ENCODE measurements at regions of chr3 and their contacts with region 1.

Region 1: DNA sequence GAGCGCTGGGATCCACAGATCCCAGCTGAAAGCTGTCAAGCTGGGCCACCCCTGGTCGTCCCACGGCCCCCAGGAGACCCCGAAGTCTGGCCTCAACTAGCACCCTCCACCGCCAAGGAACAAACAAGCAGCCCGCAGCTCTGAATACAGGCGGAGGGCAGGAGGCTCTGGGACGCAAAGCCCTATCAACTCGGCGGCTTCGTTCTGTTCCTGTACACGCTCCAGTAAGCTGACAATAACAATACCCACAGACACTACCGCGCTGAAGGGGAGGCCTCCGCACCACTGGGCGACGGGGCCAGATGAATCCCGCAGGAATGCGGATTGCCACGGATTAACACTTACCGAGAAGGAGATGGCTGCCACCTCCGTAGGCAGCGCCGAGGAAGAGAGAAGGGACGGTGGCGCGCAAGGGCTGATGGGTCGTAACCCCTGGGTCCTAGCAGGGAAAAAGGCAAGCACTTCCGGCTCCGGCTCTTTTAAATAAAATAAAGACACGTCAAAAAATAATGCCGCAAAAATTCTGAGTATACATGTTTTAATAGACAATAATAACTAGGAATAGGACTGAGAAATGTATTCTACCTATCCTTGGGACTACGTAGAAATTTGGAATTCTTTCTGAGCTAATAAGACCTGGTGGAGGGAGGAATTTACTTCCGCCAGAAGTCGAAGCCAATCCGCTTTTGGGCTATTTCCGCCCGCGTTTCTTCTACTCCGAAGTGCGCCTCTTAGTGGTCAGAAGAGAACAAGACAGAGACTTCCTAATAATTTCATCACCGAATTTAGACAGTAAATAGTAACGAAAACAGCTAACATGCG is at the start of gene RPL32:
- DNase-seq: peak; percentile 78
- ATAC-seq: peak; percentile 92
- H3K4me3 Mint-ChIP-seq: peak within 1 kb of the TSS; percentile 96
- H3K27ac Mint-ChIP-seq: peak within 1 kb of the TSS; percentile 100
- H3K4me1 Mint-ChIP-seq: peaks cover 48% of the 10 kb centered on the region
- H3K27me3 Mint-ChIP-seq: no peaks in the 10 kb centered on the region
- CTCF ChIP-seq: no peak
- total RNA-seq, gene RPL32: 2,996 and 3,448 TPM in 2 replicates

Region 2: DNA sequence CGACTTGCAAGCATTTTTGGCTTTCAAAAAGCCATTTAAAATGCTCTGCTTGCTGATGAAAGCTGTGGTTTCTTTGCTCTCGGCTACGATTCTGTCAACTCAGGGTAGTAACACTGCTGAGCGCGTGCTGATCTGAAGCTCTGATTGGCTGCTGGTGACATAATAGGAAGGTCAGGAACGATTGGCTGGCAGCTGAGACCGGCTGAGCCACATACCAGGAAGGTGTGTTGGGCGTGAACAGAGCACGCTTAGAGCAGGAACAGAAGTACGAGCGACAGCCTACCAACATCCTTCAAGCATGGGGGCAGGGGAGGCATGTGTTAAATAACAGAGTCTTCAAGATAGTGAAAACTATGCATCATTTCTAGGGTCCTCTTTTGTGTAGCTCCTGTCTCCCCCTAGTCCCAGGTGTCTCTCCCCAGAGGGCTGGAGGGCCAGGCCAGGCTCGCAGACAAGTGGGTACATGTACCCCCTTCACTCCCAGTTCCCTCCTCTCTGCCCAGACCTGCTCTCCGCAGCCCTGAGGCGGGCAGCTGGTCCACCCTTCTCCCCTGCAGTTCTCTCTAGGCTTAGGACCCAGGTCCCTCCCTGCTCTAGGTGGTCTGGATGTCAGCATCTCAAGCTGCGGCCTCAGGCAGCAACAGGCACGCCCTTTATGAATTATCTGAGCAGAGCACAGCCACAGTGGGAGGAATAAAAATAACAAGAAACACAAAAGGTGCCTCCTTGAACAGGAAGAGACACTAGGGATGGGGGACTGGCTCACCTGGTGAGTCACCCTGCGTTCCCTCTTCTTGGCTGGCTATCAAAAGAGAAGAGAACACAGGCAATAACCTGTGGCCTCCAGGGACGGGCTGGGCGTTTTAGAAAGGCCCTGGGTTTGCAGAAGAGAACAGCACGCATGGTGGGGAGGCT is 1070.6 kb before region 1 on chr3:
- CTCF ChIA-PET with region 1: no interaction called
- POLR2A ChIA-PET with region 1: no interaction called
- intact Hi-C with region 1: no loop called
- DNase-seq: peak; percentile 20
- ATAC-seq: peak; percentile 100
- H3K4me3 Mint-ChIP-seq: peak overlapping the region; percentile 21
- H3K27ac Mint-ChIP-seq: peak overlapping the region; percentile 3
- H3K4me1 Mint-ChIP-seq: peaks cover 16% of the 10 kb centered on the region
- H3K27me3 Mint-ChIP-seq: no peaks in the 10 kb centered on the region
- CTCF ChIP-seq: no peak

Region 3: GRCh38 chr3:12663936-12664908 is 177.1 kb before region 1 on chr3 and contains the start of gene RAF1:
- CTCF ChIA-PET with region 1: no interaction called
- POLR2A ChIA-PET with region 1: interaction called, 18 read pairs
- intact Hi-C with region 1: loop called (anchors 1 kb)
- DNase-seq: peak; percentile 96
- ATAC-seq: peak; percentile 94
- H3K4me3 Mint-ChIP-seq: peak within 1 kb of the TSS; percentile 98
- H3K27ac Mint-ChIP-seq: peak within 1 kb of the TSS; percentile 98
- H3K4me1 Mint-ChIP-seq: peaks cover 37% of the 10 kb centered on the region
- H3K27me3 Mint-ChIP-seq: no peaks in the 10 kb centered on the region
- CTCF ChIP-seq: no peak
- total RNA-seq, gene RAF1: 89.9 and 103 TPM in 2 replicates

Region 4: DNA sequence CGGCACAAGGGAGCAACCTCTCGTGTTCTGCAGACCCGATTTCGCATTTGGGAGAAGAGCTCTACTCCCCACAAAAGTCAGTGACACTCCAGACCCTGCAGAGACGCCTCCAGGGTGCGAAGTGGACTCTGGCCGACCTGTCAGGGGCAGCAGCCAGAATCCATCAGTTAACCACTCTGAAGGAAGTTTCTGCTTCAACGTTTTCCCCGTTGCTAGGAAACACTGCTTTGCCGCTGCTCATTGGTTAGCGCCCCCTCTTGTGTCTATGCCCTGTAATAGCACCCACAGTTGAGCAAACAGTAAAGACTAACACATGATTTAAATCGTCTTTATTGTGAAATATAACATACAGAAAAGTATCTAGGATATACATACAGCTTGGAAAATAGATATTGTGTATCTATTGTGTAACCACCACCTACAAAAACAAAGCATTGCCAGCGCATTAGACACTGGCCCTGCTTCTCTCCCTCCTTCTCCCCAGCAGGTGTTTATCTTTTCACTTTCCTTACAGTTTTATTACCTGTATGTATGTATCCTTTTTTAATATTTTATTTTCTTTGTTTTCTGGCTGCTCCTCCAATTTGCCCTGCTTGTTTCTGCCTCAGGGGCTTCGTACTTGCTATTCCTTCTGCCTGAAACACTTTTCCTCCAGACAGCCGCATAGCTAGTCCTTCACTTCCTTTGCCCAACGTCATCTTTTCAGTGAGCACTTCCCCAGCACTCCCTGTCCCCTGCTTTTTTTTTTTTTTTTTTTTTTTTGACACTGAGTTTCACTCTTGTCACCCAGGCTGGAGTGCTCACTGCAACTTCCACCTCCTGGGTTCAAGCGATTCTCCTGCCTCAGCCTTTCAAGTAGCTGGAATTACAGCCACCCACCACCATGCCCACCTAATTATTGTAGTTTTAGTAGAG is 121.1 kb before region 1 on chr3:
- CTCF ChIA-PET with region 1: no interaction called
- POLR2A ChIA-PET with region 1: interaction called, 3 read pairs
- intact Hi-C with region 1: loop called (anchors 1 kb)
- DNase-seq: peak; percentile 45
- ATAC-seq: peak; percentile 99
- H3K4me3 Mint-ChIP-seq: peak overlapping the region; percentile 74
- H3K27ac Mint-ChIP-seq: peak overlapping the region; percentile 69
- H3K4me1 Mint-ChIP-seq: peaks cover 7% of the 10 kb centered on the region
- H3K27me3 Mint-ChIP-seq: peaks cover 3% of the 10 kb centered on the region
- CTCF ChIP-seq: peak; percentile 93

Region 5: DNA sequence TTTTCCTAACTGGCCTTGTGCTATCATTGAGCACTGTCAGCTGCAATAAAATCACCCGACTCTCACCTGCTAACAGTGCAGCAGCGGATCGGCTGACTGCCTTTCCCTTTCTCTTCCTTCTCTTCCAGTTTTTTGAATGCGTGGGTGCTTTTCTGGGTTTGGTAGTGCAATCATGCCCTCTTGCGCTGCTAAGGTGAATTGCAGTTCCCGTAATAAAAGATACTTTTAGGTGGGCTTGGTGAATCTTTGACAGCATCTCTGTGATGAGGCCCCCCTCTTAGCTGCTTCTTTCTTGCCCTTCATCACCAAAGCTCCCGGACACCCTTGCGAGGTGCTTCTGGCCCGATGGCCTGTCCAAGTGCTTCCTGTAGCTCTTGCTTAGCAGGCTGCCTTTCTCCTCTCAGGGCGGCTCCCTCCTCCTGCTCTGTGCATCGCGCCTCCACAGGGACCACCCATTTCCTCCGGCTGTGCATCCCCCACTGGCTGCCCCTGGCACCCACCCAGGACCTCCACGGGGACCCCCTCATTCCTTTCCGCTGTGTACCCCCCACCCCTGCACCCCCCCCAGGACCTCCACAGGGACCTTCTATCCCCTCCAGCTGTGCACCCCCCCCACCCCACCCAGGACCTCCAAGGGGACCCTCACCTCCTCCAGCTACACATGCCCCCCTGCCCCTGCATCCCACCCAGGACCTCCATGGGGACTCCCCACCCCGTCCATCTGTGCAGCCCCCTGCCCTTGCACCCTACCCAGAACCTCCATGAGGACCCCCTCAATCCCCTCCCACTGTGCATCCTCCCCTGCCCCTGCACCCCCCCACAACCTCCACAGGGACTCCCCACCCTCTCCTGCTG is 50.9 kb after region 1 on chr3:
- CTCF ChIA-PET with region 1: interaction called, 18 read pairs
- POLR2A ChIA-PET with region 1: interaction called, 6 read pairs
- intact Hi-C with region 1: loop called (anchors 2 kb)
- DNase-seq: no peak
- ATAC-seq: peak; percentile 52
- H3K4me3 Mint-ChIP-seq: no peak overlapping the region
- H3K27ac Mint-ChIP-seq: no peak overlapping the region
- H3K4me1 Mint-ChIP-seq: peaks cover 15% of the 10 kb centered on the region
- H3K27me3 Mint-ChIP-seq: peaks cover 3% of the 10 kb centered on the region
- CTCF ChIP-seq: peak; percentile 89

Region 6: DNA sequence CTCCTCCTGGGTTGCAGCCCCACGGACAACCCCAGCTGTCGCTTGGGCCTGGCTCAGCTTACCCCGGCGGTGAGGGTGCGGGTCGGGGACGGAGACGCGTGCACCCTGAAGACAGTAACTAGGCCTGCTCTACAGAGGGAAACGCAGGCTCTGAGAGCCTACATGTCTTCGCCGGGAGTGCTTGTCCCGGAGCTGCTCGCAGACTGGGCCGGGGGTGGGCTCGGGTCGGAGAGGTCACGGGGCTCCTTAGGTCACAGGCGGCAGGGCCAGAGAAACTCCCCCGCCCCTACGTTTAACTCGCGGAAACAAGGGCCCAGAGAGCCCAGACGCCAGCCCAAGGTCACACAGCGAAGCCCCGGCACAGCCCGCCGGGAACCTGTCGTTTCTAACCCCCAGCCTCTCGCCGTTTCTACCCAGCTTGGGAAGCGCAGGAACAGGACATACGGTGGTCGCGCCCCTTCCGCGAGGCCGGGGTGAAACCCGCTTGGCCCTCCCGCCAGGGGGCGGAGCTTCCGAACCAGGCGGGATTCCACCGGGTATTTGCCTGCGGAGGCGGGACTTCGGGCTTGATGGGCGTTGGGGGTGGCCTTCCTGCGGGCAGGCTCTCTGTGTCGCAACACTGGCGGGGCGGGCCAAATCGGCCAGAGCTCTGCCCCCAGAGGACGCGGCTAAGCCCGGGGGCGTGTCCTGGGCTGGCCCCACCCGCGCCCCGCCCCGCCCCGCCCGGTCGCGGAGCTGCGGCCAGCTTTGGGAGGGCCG is 638.4 kb after region 1 on chr3 and contains the start of gene HDAC11:
- CTCF ChIA-PET with region 1: interaction called, 5 read pairs
- POLR2A ChIA-PET with region 1: interaction called, 6 read pairs
- intact Hi-C with region 1: loop called (anchors 1 kb)
- DNase-seq: peak; percentile 97
- ATAC-seq: peak; percentile 97
- H3K4me3 Mint-ChIP-seq: peak within 1 kb of the TSS; percentile 90
- H3K27ac Mint-ChIP-seq: peak within 1 kb of the TSS; percentile 79
- H3K4me1 Mint-ChIP-seq: peaks cover 2% of the 10 kb centered on the region
- H3K27me3 Mint-ChIP-seq: peaks cover under 1% of the 10 kb centered on the region
- CTCF ChIP-seq: no peak
- total RNA-seq, gene HDAC11: 1.6 and 2.5 TPM in 2 replicates

Measured in activated B cell treated with CpG ODN at 0.5 μM for 24 hours (primary cell).